Prostate gland (tissue), 2 donors: ENCODE measurements at regions of chr14 and their contacts with region 1.

Region 1: DNA sequence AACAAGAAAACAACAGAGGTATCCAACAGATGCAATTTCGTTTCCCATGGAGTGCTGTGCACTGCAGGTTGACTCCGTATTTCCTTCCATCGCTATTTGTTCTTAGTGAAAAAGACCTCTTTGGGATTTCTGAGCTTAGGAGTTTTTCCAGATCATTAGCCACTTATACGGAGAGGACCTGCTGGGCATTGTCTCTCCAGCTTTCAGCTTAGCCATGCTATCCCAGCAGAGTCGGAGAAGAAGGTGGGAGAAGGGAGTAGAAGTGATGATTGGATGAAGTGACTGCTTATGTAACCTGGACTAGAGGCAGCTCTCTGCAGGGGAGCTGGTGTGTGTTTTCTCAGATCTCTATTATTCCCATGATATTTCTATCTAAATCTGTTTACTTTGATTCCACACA is 737.7 kb downstream of the DIO2 start:
- DNase-seq: no peak
- H3K4me3 ChIP-seq: no peak overlapping the region
- H3K27ac ChIP-seq: no peak overlapping the region
- H3K4me1 ChIP-seq: no peaks in the 10 kb centered on the region
- H3K27me3 ChIP-seq: no peaks in the 10 kb centered on the region
- CTCF ChIP-seq: no peak
- POLR2A ChIP-seq: no peak

Region 2: DNA sequence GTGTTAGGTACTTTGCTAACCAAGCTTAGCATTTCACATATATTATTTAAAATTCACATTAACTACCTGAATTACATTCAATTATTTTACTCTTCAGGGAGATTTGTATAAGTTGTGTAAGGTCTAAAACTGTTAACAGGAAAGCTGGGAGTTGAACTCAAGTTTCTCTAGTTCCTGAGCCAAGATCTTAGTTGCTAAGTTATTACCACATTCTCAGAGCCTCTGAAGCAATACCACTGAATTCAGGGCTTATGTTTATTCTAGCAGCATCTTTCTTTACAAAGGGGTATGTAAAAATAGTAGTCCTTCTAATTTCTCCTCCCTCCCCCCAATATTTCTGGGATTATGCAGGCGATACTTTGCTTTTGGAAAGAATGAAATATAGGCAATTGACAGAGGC is 49.2 kb before region 1 on chr14:
- intact Hi-C with region 1: loop called (anchors 2 kb)
- DNase-seq: no peak
- H3K4me3 ChIP-seq: no peak overlapping the region
- H3K27ac ChIP-seq: no peak overlapping the region
- H3K4me1 ChIP-seq: no peaks in the 10 kb centered on the region
- H3K27me3 ChIP-seq: no peaks in the 10 kb centered on the region
- CTCF ChIP-seq: no peak
- POLR2A ChIP-seq: no peak